BJ (cell line): ENCODE measurements at regions of chr3 and their contacts with region 1.

Region 1: DNA sequence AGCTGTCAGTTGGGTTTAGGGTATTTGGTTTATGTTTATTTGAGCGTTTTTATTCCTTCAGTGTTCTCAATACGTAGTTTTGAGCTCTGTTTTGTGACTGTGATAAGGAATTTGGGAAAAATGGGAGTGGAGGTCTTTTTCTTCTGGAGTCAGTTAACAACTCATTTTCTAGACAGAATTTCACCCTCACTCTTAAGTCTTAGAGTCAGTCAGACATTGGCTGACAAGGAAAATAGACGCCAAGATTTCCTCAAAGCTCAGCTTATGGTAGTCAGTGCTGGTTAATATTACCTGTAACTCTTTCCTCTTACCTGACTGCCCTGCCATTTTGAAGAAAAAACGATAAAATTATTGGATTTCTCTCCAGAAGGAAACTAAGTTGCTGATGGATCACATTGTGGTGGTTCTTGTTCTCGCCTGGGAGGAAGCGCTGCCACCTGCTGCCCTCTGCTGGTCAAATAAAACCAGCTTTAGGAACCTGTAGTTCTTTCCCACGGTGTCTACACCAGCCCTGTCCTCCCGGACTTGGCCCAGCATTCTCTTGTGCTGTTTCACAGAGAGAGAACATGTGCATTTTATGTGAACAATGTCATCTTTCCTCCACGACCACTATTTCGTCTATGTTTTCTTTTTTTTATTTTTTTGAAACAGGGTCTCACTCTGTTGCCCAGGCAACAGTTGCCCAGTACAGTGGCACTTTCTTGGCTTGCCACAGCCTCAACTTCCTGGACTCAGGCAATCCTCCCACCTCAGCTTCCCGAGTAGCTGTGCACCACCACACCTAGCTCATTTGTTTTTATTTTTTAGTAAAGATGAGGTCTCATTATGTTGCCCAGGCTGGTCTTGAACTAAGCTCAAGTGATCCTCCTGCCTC is 41.4 kb upstream of the UMPS start:
- DNase-seq: no peak
- H3K4me3 ChIP-seq: no peak overlapping the region
- H3K27me3 ChIP-seq: no peaks in the 10 kb centered on the region; the same call in 1 of the 2 replicates
- CTCF ChIP-seq: peak; percentile 87

Region 2: GRCh38 chr3:124569761-124570160 is 119.1 kb before region 1 on chr3:
- CTCF ChIA-PET with region 1: interaction called, 189 read pairs
- POLR2A ChIA-PET with region 1: interaction called, 3 read pairs
- DNase-seq: no peak
- H3K4me3 ChIP-seq: no peak overlapping the region
- H3K27me3 ChIP-seq: peaks cover 2% of the 10 kb centered on the region; the same call in 1 of the 2 replicates
- CTCF ChIP-seq: no peak

Region 3: DNA sequence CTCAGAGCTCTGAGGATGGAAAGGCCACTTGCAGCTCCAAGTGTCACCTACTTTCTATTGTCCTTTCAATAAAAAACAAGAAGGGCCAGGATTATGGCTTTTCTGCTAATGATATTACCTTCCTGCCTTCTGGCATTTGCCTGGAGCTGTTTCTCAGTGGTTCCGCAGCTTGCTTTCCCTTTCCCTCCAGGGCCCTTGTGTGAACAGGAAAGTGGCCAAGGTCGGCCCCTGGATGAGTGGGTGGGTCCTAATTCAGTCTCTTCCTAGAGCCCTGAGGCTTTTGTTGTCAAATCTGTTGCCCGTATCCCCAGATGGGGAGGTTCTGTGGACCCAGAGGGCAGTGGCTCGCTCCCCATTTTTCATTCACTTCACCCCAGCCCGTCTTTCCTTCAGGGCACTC is 22.8 kb before region 1 on chr3:
- CTCF ChIA-PET with region 1: interaction called, 12 read pairs
- POLR2A ChIA-PET with region 1: no interaction called
- DNase-seq: no peak
- H3K4me3 ChIP-seq: no peak overlapping the region
- H3K27me3 ChIP-seq: no peaks in the 10 kb centered on the region
- CTCF ChIP-seq: no peak

Region 4: GRCh38 chr3:124676236-124676635 is 12.6 kb before region 1 on chr3:
- CTCF ChIA-PET with region 1: interaction called, 30 read pairs
- POLR2A ChIA-PET with region 1: interaction called, 7 read pairs
- DNase-seq: no peak
- H3K4me3 ChIP-seq: no peak overlapping the region
- H3K27me3 ChIP-seq: no peaks in the 10 kb centered on the region; the same call in 1 of the 2 replicates
- CTCF ChIP-seq: no peak

Region 5: GRCh38 chr3:124700880-124701684 is 12.3 kb after region 1 on chr3:
- CTCF ChIA-PET with region 1: interaction called, 29 read pairs
- POLR2A ChIA-PET with region 1: no interaction called
- DNase-seq: no peak
- H3K4me3 ChIP-seq: no peak overlapping the region
- H3K27me3 ChIP-seq: peaks cover under 1% of the 10 kb centered on the region
- CTCF ChIP-seq: no peak

Region 6: GRCh38 chr3:125496701-125497100 is 807.9 kb after region 1 on chr3:
- CTCF ChIA-PET with region 1: no interaction called
- POLR2A ChIA-PET with region 1: no interaction called
- DNase-seq: no peak
- H3K4me3 ChIP-seq: no peak overlapping the region
- H3K27me3 ChIP-seq: no peaks in the 10 kb centered on the region
- CTCF ChIP-seq: no peak